ENCODE measurements at regions of chr1 and their contacts with region 1.

Region 1: GRCh38 chr1:221203224-221204054 is 324.2 kb downstream of the HLX start:
- DNase-seq: peak; percentile 57 to 90 (median 79)

Region 2: GRCh38 chr1:220873868-220874655 is 329.4 kb before region 1 on chr1:
- intact Hi-C with region 1: loop called (anchors 5 kb)
- DNase-seq: peak in 16 of 42 donors; percentile 41 to 79 (median 59)

Region 3: DNA sequence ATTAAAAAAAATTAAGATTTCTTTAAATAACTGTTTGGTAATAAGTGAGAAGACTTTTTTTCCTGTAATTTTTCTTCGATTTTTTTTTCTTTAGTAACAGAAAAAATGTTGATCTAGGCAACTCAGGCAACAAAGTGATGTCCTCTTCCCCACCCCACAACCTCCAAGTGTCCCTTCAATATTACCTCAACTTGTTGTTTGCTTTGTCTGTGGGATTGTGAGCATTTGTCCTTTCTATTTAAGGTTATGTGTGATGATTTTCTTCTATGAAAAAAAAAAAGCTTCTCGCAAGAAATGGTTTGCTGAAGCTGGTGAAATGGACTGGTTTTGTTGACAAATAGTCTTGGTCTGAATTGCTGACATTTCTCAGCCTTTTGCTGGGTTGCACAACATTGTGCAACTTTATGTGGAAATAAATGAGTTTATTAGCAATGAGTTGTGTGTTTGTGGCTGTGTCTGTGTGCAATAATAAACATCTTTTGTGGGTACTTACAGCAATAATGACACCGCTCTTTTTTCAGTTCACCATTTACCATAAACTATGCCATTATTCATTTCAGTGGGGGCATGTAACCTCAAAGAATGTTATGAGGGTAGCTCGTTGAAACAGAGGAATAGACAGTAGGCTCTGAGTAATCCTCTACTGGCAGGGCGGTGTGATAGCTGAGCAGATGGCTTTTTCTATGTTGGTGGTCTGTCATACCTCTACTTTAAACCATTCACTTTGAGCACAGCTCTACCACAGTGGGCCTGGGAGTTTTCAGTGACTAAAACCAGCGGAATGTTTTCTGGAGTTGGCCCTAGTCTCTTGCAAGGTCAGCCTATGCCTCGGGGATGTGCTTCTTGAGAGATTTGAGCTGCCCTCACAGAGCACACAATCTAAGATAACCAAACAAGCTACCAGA is 105.7 kb before region 1 on chr1:
- intact Hi-C with region 1: no loop called
- DNase-seq: no peak